Activated CD8-positive, alpha-beta T cell treated with anti-CD3 and anti-CD28 coated beads, Interleukin-2, amount 10 ng/mL, durations not matched to agents 7 days and 5 days (primary cell): ENCODE measurements at regions of chr9 and their contacts with region 1.

Region 1: GRCh38 chr9:112097712-112098688 is 77.1 kb downstream of the SUSD1 start:
- DNase-seq: peak; percentile 81
- ATAC-seq: peak; percentile 91
- H3K4me3 Mint-ChIP-seq: no peak overlapping the region
- H3K27ac Mint-ChIP-seq: no peak overlapping the region
- H3K4me1 Mint-ChIP-seq: peaks cover 32% of the 10 kb centered on the region
- H3K27me3 Mint-ChIP-seq: no peaks in the 10 kb centered on the region

Region 2: GRCh38 chr9:112086627-112087026 is 11.4 kb before region 1 on chr9:
- CTCF ChIA-PET with region 1: interaction called, 20 read pairs
- POLR2A ChIA-PET with region 1: interaction called, 3 read pairs
- DNase-seq: peak; percentile 4
- ATAC-seq: no peak
- H3K4me3 Mint-ChIP-seq: no peak overlapping the region
- H3K27ac Mint-ChIP-seq: no peak overlapping the region
- H3K4me1 Mint-ChIP-seq: peaks cover 6% of the 10 kb centered on the region
- H3K27me3 Mint-ChIP-seq: no peaks in the 10 kb centered on the region

Region 3: GRCh38 chr9:112112941-112113681 is 15.1 kb after region 1 on chr9:
- CTCF ChIA-PET with region 1: interaction called, 15 read pairs
- POLR2A ChIA-PET with region 1: no interaction called
- DNase-seq: no peak
- ATAC-seq: no peak
- H3K4me3 Mint-ChIP-seq: no peak overlapping the region
- H3K27ac Mint-ChIP-seq: no peak overlapping the region
- H3K4me1 Mint-ChIP-seq: no peaks in the 10 kb centered on the region
- H3K27me3 Mint-ChIP-seq: no peaks in the 10 kb centered on the region

Region 4: DNA sequence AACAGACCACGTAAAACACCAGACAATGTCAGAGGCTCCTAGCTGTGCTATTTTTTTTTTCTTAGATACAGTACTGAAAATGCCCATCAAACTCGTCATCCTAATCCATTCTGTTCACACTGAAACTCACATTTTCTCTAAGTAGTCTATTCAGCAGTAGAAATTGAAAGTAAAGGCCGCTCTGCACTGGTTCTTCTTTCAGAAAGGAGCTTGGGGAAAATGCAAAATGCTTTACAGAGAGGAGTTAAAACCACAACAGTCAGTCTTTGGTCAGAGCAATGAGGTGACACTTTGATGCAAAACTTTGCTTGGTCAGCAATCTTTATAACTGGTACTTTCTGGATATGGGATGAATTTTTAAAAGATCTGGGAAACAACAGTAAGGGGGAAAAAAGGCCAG is 120.9 kb after region 1 on chr9:
- CTCF ChIA-PET with region 1: interaction called, 12 read pairs
- POLR2A ChIA-PET with region 1: no interaction called
- DNase-seq: peak; percentile 51
- ATAC-seq: peak; percentile 89
- H3K4me3 Mint-ChIP-seq: peak overlapping the region; percentile 62
- H3K27ac Mint-ChIP-seq: peak overlapping the region; percentile 85
- H3K4me1 Mint-ChIP-seq: peaks cover 20% of the 10 kb centered on the region
- H3K27me3 Mint-ChIP-seq: no peaks in the 10 kb centered on the region

Region 5: GRCh38 chr9:112361601-112362000 is 263.6 kb after region 1 on chr9:
- CTCF ChIA-PET with region 1: interaction called, 69 read pairs
- POLR2A ChIA-PET with region 1: no interaction called
- DNase-seq: no peak
- ATAC-seq: no peak
- H3K4me3 Mint-ChIP-seq: no peak overlapping the region
- H3K27ac Mint-ChIP-seq: no peak overlapping the region
- H3K4me1 Mint-ChIP-seq: peaks cover 6% of the 10 kb centered on the region
- H3K27me3 Mint-ChIP-seq: peaks cover 18% of the 10 kb centered on the region

Region 6: DNA sequence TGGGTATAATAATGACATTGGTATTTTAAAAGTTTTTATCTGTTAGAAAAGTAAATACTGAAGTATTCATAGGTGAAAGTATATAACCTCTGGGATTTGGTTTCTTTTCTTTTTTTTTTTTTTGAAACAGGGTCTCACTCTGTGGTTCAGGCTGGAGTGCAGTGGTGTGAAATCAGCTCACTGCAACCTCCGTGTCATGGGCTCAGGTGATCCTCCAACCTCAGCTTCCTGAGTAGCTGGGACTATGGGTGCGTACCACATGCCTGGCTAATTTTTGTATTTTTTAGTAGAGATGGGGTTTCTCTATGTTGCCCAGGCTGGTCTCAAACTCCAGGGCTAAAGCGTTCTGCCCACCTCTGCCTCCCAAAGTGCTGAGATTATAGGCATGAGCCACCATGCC is 289.1 kb after region 1 on chr9:
- CTCF ChIA-PET with region 1: no interaction called
- POLR2A ChIA-PET with region 1: no interaction called
- DNase-seq: peak; percentile 46
- ATAC-seq: peak; percentile 83
- H3K4me3 Mint-ChIP-seq: no peak overlapping the region
- H3K27ac Mint-ChIP-seq: peak overlapping the region; percentile 55
- H3K4me1 Mint-ChIP-seq: peaks cover 30% of the 10 kb centered on the region
- H3K27me3 Mint-ChIP-seq: no peaks in the 10 kb centered on the region

Region 7: DNA sequence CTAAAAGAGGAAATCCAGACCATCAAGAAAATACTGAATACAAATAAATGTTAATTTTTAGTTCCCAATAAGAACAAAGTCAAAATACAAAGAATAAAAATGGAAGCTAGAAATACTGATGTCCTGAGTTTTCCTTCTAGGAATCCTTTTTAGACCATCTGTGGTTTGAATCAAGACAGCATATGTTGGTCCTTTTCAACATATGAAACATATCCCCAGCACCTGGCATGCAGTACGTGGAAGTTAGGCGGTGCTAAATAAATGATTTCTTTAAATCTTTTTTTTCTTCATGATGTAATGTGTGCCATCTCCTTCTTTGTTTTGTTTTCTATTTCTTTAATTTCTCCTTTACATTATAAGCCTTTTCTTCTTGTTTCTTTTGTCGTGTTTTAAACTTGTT is 422.7 kb after region 1 on chr9:
- CTCF ChIA-PET with region 1: no interaction called
- POLR2A ChIA-PET with region 1: no interaction called
- DNase-seq: no peak
- ATAC-seq: no peak
- H3K4me3 Mint-ChIP-seq: no peak overlapping the region
- H3K27ac Mint-ChIP-seq: no peak overlapping the region
- H3K4me1 Mint-ChIP-seq: no peaks in the 10 kb centered on the region
- H3K27me3 Mint-ChIP-seq: no peaks in the 10 kb centered on the region